ENCODE measurements at regions of chr3 and their contacts with region 1.

Region 1: GRCh38 chr3:133927540-133928066 is 31.9 kb upstream of the RAB6B start:
- DNase-seq: peak; percentile 85
- ATAC-seq: peak; percentile 93

Region 2: GRCh38 chr3:133815386-133815785 is 112.2 kb before region 1 on chr3:
- intact Hi-C with region 1: loop called (anchors 5 kb)
- DNase-seq: no peak
- ATAC-seq: no peak

Region 3: DNA sequence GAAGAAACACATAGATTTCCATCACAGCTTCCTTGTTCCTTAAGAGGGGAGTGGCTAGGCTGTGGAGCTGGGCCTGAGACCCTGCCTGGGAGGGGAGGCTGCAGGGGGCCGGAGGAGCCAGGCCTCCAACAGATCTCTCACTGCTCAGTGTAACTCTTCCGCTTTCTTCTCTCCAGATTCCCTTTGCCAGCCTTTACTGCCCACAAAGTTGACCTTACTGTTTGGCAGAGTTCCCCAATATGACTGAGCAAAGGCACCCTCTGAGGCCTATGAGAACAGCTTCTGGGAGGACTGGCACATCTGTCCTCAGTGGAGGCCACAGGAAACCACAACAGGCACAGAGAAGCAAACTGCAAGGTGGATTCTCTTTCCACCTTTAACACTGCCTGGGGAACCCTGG is 64.0 kb after region 1 on chr3:
- intact Hi-C with region 1: no loop called
- DNase-seq: no peak
- ATAC-seq: peak; percentile 21

Region 4: GRCh38 chr3:134048278-134049011 is 120.8 kb after region 1 on chr3:
- intact Hi-C with region 1: loop called (anchors 10 kb)
- DNase-seq: no peak
- ATAC-seq: no peak